ENCODE measurements at regions of chr17 and their contacts with region 1.

Region 1: GRCh38 chr17:2416010-2416734 is 15.3 kb upstream of the MNT start:
- DNase-seq: peak; percentile 64 to 98 (median 93)

Region 2: GRCh38 chr17:2239882-2240430 is 176.2 kb before region 1 on chr17:
- intact Hi-C with region 1: no loop called
- DNase-seq: peak in 2 of 42 donors; percentile 25 to 55

Region 3: DNA sequence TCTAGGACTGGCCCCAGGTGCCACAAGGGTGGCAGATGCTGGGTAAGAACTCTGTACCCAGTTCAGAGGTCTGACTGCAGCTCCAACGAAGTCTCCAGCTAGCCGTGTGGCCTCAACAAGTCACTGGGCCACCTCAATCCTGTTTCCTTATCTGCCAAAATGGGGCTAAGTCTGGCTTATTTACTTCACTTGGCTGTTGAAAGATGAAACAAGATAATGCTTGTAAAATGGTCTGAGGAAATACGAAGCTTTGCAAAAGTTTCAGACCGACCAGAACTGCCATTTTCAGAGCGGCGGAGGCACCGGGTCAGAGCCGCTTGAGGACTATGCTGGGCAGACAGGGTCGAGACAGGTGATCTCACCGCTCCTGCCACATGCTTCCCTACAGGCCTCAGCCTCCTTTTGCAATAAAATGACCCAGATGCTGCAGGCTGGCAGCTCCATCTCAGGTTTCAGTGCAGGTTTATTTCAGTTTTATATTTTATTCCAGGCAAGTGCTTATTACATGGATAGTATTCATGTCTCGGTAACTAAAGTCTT is 32.5 kb before region 1 on chr17:
- intact Hi-C with region 1: loop called (anchors 2 kb)
- DNase-seq: no peak

Region 4: GRCh38 chr17:2401426-2402221 is 14.5 kb before region 1 on chr17:
- intact Hi-C with region 1: loop called (anchors 2 kb)
- DNase-seq: peak; percentile 99 to 100 (median 100)

Region 5: DNA sequence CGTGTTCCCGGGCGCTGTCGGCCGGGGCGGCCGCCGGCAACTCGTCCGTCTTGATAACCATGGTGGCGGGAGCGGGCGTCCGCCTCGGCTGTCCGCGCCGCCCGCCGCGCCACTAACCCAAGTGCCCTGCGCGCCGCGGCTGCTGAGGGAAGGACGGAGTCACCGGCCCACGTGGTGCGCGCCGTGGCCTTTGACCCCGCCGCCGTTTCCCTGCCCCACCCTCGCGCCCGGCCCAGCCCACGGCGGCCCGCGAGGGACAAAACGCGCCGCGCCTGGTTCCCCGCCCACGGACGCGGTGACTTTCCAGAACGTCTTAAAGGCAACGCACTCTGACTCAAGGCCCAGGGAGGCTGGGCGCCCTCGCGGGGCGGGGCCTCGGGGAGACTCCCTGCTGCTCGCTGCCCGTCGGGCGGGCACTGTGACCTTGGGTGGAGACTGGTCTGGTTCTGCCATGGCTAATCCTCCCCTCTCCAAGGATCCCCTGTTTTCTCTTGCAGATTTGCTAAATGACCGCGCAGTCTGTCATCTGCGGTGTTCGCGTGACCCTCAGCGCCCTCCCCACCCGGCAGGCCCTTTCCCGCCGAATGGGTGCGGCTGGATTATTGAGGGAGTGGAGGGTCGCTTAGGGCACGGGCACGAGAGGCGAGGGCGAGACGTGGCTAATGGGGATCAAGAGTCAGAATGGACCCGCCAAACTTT is 295.6 kb after region 1 on chr17 and contains the start of gene CLUH:
- intact Hi-C with region 1: loop called (anchors 10 kb)
- DNase-seq: peak; percentile 88 to 98 (median 95)